ENCODE measurements at regions of chr4 and their contacts with region 1.

Region 1: DNA sequence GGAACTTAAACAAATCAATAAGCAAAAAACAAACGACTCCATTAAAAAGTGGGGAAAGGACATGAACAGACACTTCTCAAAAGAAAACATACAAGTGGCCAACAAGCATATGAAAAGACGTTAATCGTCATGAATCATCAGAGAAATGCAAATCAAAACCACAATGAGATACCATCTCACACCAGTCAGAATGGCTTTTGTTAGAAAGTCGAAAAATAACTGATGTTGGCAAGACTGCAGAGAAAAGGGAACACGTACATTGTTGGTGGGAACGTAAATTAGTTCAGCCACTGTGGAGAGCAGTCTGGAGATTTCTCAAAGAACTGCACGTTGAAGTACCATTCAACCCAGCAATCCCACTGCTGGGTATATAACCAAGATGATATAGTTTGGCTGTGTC is 23.7 kb downstream of the NEUROG2 start:
- DNase-seq: no peak
- H3K4me3 Mint-ChIP-seq: no peak overlapping the region
- H3K27ac Mint-ChIP-seq: no peak overlapping the region
- H3K4me1 Mint-ChIP-seq: no peaks in the 10 kb centered on the region
- H3K27me3 Mint-ChIP-seq: no peaks in the 10 kb centered on the region
- CTCF ChIP-seq: no peak

Region 2: GRCh38 chr4:112296949-112297880 is 195.1 kb before region 1 on chr4 and contains the start of gene ALPK1:
- CTCF ChIA-PET with region 1: no interaction called
- POLR2A ChIA-PET with region 1: no interaction called
- intact Hi-C with region 1: no loop called
- DNase-seq: peak; percentile 92
- H3K4me3 Mint-ChIP-seq: peak within 1 kb of the TSS; percentile 72
- H3K27ac Mint-ChIP-seq: peak within 1 kb of the TSS; percentile 91
- H3K4me1 Mint-ChIP-seq: no peaks in the 10 kb centered on the region
- H3K27me3 Mint-ChIP-seq: no peaks in the 10 kb centered on the region
- CTCF ChIP-seq: no peak
- total RNA-seq, gene ALPK1: 20.3 and 41.0 TPM in 2 replicates

Region 3: DNA sequence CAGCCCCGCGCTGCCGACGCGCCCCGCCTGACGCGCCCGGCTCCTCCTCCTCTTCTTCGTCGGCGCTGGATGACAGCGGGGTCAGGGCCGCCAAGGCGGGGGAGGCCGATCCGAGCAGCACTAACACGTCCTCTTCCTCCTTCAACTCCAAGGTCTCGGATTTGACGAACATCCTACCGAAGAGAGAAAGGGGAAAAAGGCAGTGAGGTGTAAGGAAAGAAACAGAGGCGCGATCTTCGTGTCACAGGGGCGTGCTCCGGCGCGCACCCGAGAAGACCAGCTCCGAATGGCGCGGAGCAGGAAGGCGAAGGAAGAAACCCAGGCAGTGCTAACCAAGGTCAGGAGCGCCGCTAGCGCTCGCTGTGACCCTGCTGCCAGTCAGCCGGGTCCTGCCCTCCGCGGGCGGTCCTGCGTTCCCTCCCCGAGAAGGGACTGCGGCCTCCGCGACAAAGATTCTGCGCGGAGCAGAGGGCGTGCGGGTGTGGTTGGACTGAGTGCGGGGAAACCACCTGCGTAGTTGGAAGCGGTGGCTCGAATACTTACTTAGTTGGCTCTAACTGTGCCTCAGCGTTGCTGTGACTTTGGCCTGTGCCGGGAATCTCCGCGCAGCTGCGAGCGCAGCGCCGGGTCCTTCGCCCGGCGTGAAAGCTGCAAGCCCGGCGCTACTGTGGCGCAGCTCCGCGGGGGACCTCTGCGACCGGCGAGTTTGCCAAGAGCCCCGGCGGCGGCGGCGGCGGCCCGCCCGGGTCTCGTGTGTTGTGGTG is 23.2 kb after region 1 on chr4:
- CTCF ChIA-PET with region 1: no interaction called
- POLR2A ChIA-PET with region 1: no interaction called
- intact Hi-C with region 1: loop called (anchors 1 kb)
- DNase-seq: no peak
- H3K4me3 Mint-ChIP-seq: peak overlapping the region; percentile 98
- H3K27ac Mint-ChIP-seq: no peak overlapping the region
- H3K4me1 Mint-ChIP-seq: peaks cover 26% of the 10 kb centered on the region
- H3K27me3 Mint-ChIP-seq: peaks cover 93% of the 10 kb centered on the region
- CTCF ChIP-seq: no peak

Region 4: DNA sequence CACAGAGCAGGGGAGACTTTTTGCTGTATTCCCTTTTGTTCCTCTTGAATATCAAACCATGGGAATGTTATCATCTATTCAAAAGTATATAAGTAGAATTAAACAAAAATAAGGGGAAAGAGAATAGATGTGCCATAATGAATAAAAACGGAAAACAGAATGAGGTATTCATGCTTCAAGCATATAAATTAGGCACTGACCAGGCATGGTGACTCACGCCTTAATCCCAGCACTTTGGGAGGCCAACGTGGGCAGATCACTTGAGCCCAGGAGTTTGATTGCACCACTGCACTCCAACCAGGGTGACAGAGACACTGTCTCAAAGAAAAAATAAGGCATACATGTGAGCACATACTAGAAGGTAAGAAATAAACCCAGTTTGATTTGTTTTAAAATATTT is 39.9 kb after region 1 on chr4:
- CTCF ChIA-PET with region 1: no interaction called
- POLR2A ChIA-PET with region 1: no interaction called
- intact Hi-C with region 1: no loop called
- DNase-seq: peak; percentile 68
- H3K4me3 Mint-ChIP-seq: no peak overlapping the region
- H3K27ac Mint-ChIP-seq: no peak overlapping the region
- H3K4me1 Mint-ChIP-seq: no peaks in the 10 kb centered on the region
- H3K27me3 Mint-ChIP-seq: no peaks in the 10 kb centered on the region
- CTCF ChIP-seq: no peak